H1 (cell line): ENCODE measurements at regions of chr4 and their contacts with region 1.

Region 1: GRCh38 chr4:27702730-27703431 is 842.2 kb downstream of the STIM2 start:
- DNase-seq: peak in 1 of 2 experiments; percentile 50
- H3K4me3 ChIP-seq: no peak overlapping the region
- H3K27ac ChIP-seq: no peak overlapping the region
- H3K4me1 ChIP-seq: peaks cover 0 to 6% (median 4%) of the 10 kb centered on the region in 4 experiments; a peak in 4 of 7 replicates
- H3K27me3 ChIP-seq: no peaks in the 10 kb centered on the region
- CTCF ChIP-seq: peak in 2 of 3 experiments; percentile 46 to 66; a peak in 3 of 4 replicates
- EP300 ChIP-seq: no peak
- POLR2A ChIP-seq: no peak
- RAD21 ChIP-seq: peak; percentile 73 to 75

Region 2: DNA sequence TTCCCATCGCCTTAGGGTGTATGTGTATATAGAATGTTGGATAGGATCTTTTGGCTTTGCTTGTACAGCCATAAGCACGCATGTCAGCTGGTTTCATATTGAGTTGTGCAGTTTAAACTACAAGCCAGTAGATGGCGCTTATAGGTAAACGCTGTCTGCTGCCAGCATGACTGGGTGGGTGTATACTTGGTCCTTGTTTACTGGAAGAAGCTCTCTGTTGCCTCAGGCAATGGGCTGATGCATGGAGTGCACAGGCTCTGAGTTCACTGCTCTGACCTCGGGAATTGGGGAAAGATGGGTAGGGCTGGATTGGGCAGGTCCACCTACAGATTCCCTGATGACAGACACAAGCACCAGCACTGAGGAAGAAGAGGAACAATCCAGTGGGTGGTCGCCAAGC is 10.7 kb before region 1 on chr4:
- CTCF ChIA-PET with region 1: interaction called, 24 read pairs
- POLR2A ChIA-PET with region 1: no interaction called
- DNase-seq: no peak
- H3K4me3 ChIP-seq: no peak overlapping the region
- H3K27ac ChIP-seq: no peak overlapping the region
- H3K4me1 ChIP-seq: no peaks in the 10 kb centered on the region; a peak in 1 of 7 replicates
- H3K27me3 ChIP-seq: no peaks in the 10 kb centered on the region
- CTCF ChIP-seq: peak; percentile 7 to 80 (median 48)
- EP300 ChIP-seq: no peak
- POLR2A ChIP-seq: no peak
- RAD21 ChIP-seq: peak; percentile 63 to 69

Region 3: DNA sequence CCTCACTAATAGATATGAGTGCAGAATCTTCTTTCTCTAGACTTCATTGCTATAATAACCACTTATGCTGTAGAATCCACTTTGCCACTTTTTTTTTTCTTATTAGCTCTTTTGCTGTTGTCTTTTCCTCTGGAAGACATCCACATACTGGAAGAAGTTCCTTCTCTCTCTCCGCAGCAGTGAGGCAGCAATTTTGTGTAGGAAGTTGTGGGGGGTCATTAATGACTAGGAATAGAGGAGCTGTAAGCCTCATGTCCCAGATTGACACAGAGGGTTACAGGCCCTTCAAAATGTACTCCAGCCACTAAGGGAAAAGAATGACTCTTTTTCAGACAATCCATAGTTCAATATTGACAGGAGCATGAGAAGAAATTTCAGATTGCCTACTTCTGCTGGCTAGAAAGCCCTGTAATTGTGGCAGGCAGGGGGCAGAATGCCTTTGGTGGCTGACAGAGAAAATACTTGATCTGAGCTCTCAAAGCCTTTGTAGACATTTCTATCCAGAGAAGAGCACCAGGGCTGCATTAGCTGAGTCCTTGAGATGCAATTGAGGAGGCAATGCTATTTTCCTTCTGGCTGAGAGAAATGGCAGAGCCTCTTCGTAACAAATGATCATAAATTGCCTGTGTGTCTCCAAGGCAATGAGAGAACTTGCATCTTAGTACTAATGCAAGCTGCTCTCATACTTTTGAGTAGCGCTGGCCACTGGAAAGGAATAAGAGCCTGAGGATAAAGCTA is 14.0 kb after region 1 on chr4:
- CTCF ChIA-PET with region 1: interaction called, 12 read pairs
- POLR2A ChIA-PET with region 1: no interaction called
- DNase-seq: no peak
- H3K4me3 ChIP-seq: no peak overlapping the region
- H3K27ac ChIP-seq: no peak overlapping the region
- H3K4me1 ChIP-seq: peaks cover 0 to 2% (median 1%) of the 10 kb centered on the region in 4 experiments; a peak in 2 of 7 replicates
- H3K27me3 ChIP-seq: no peaks in the 10 kb centered on the region
- CTCF ChIP-seq: peak in 1 of 3 experiments; percentile 38; a peak in 1 of 4 replicates
- EP300 ChIP-seq: no peak
- POLR2A ChIP-seq: no peak
- RAD21 ChIP-seq: peak in 1 of 2 experiments; percentile 23; a peak in 1 of 4 replicates

Region 4: GRCh38 chr4:27764526-27764837 is 61.6 kb after region 1 on chr4:
- CTCF ChIA-PET with region 1: no interaction called
- POLR2A ChIA-PET with region 1: no interaction called
- DNase-seq: no peak
- H3K4me3 ChIP-seq: no peak overlapping the region
- H3K27ac ChIP-seq: no peak overlapping the region
- H3K4me1 ChIP-seq: no peaks in the 10 kb centered on the region
- H3K27me3 ChIP-seq: no peaks in the 10 kb centered on the region
- CTCF ChIP-seq: no peak
- EP300 ChIP-seq: no peak
- POLR2A ChIP-seq: no peak
- RAD21 ChIP-seq: no peak